ENCODE measurements at regions of chr16 and their contacts with region 1.

Region 1: GRCh38 chr16:28069971-28070794 is 6.7 kb upstream of the GSG1L start:
- DNase-seq: no peak
- ATAC-seq: no peak
- H3K4me3 Mint-ChIP-seq: no peak overlapping the region
- H3K27ac Mint-ChIP-seq: no peak overlapping the region
- H3K4me1 Mint-ChIP-seq: no peaks in the 10 kb centered on the region
- H3K27me3 Mint-ChIP-seq: peaks cover 7% of the 10 kb centered on the region
- CTCF ChIP-seq: no peak

Region 2: DNA sequence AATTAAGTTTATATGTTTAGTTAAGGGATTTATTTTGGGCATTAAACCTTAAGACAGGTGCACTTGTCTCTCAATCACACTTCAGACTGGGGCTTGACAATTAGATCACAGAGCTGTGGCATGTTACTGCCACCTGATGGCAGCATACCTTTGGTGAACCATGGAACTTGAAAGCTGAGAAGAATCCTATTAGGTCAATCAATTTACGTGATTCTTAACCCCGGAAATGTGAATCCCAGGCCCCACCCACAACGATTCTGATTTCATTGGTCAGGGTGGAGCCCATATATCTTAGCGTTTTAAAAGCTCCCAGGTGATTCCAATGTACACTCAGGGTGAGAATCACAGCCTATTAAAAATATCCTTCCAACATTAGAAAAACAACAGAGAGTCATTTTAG is 97.7 kb before region 1 on chr16:
- CTCF ChIA-PET with region 1: interaction called, 72 read pairs
- POLR2A ChIA-PET with region 1: no interaction called
- intact Hi-C with region 1: loop called (anchors 5 kb)
- DNase-seq: peak; percentile 76
- ATAC-seq: peak; percentile 88
- H3K4me3 Mint-ChIP-seq: no peak overlapping the region
- H3K27ac Mint-ChIP-seq: no peak overlapping the region
- H3K4me1 Mint-ChIP-seq: peaks cover 1% of the 10 kb centered on the region
- H3K27me3 Mint-ChIP-seq: peaks cover 14% of the 10 kb centered on the region
- CTCF ChIP-seq: peak; percentile 71

Region 3: GRCh38 chr16:27977966-27978365 is 92.2 kb before region 1 on chr16:
- CTCF ChIA-PET with region 1: interaction called, 72 read pairs
- POLR2A ChIA-PET with region 1: no interaction called
- intact Hi-C with region 1: loop called (anchors 5 kb)
- DNase-seq: no peak
- ATAC-seq: no peak
- H3K4me3 Mint-ChIP-seq: no peak overlapping the region
- H3K27ac Mint-ChIP-seq: no peak overlapping the region
- H3K4me1 Mint-ChIP-seq: no peaks in the 10 kb centered on the region
- H3K27me3 Mint-ChIP-seq: peaks cover 9% of the 10 kb centered on the region
- CTCF ChIP-seq: no peak

Region 4: GRCh38 chr16:28081391-28081968 is 11.3 kb after region 1 on chr16:
- CTCF ChIA-PET with region 1: interaction called, 18 read pairs
- POLR2A ChIA-PET with region 1: no interaction called
- intact Hi-C with region 1: no loop called
- DNase-seq: no peak
- ATAC-seq: no peak
- H3K4me3 Mint-ChIP-seq: no peak overlapping the region
- H3K27ac Mint-ChIP-seq: no peak overlapping the region
- H3K4me1 Mint-ChIP-seq: no peaks in the 10 kb centered on the region
- H3K27me3 Mint-ChIP-seq: no peaks in the 10 kb centered on the region
- CTCF ChIP-seq: no peak